Right ventricle myocardium inferior (tissue), 1 donor: ENCODE measurements at regions of chr12 and their contacts with region 1.

Region 1: DNA sequence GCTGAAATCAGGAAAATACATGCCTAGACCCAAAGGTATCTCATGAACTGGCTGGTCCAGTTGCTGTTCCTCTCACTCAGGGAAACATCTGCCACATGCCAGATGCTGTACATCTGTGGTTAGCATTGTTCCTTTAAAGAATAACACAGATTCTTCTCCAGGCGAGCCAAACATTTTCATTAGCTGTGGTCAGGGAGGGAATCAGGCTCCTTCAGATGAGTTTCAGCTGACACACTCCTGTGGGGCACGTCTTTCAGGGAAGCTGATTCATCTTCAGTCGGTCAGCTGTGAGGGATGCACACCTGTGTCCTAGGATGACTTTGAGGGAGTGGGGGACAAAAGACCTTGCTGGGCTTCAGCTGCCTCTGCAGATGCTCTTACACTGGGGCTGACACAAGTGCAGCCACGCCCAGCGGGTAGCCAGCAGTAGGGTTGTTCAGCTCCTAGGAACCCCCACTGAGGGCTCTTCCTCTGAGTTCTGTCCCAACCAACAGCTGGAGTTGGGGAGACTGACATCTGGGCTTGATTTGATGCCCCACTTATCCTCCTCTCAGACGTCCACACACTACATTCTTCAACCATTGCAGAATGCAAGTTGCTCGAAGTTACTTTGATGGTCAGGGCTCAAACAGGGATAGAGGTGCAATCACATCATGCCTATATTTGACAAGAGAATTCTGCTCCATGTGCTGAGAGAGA is 155.0 kb downstream of the NUAK1 start:
- DNase-seq: no peak
- ATAC-seq: no peak

Region 2: DNA sequence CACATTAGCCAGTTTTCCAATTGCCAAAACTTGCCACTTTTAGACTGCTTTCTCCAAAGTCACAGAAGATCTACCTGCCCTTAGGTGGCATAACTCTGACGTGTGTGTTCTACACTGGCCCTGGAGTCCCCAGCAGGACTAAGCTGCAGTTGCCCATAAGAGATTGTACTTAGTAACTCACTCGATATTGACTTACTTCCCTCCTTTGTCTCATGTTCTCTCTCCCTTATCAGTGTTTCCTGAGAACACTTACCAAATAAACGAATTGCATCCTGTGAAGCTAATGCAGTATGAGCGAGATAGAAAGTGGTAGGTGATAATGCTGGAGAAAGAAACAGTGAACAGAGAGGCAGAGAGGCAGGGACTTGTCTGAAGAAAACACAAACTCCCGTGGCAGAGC is 37.7 kb after region 1 on chr12:
- intact Hi-C with region 1: no loop called
- DNase-seq: no peak
- ATAC-seq: no peak

Region 3: DNA sequence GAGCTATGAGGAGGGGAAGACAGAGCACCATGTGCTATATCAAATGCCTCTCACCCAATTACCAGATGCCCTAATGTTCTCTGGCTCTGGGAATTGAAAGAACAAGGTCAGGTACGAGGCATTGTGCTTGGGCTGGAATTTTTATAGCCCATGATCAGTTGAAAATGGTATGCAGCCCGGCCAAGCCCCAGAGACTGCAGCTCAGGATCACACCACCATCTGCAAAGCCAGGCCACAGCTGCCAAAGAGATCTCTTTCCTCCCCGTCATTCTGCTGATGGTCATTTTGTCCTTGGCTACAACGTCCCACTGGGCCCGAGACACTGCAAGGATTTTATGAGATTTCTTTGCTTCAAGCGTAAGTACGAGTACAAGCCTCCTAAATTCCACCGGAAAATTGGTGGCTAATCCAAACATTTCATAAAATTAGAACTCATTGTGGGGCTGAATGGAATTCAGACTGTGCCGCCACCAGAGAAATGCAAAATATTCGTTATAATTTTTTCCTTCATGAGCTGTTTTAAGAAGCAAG is 139.8 kb after region 1 on chr12:
- intact Hi-C with region 1: loop called (anchors 5 kb)
- DNase-seq: peak; percentile 75
- ATAC-seq: peak; percentile 88